ENCODE measurements at regions of chr5 and their contacts with region 1.

Region 1: GRCh38 chr5:148730943-148731861 is 76.9 kb upstream of the HTR4 start:
- DNase-seq: peak; percentile 89
- H3K4me3 ChIP-seq: no peak overlapping the region
- H3K27ac ChIP-seq: no peak overlapping the region
- H3K4me1 ChIP-seq: peaks cover 23% of the 10 kb centered on the region
- H3K27me3 ChIP-seq: no peaks in the 10 kb centered on the region
- CTCF ChIP-seq: peak; percentile 78 to 82
- POLR2A ChIP-seq: no peak

Region 2: GRCh38 chr5:148145916-148146315 is 585.3 kb before region 1 on chr5:
- CTCF ChIA-PET with region 1: interaction called, 14 read pairs
- POLR2A ChIA-PET with region 1: no interaction called
- dilution Hi-C with region 1: no loop called
- intact Hi-C with region 1: no loop called
- DNase-seq: peak; percentile 90
- H3K4me3 ChIP-seq: no peak overlapping the region
- H3K27ac ChIP-seq: peak overlapping the region; percentile 22
- H3K4me1 ChIP-seq: peaks cover 22% of the 10 kb centered on the region
- H3K27me3 ChIP-seq: no peaks in the 10 kb centered on the region
- CTCF ChIP-seq: no peak
- POLR2A ChIP-seq: no peak

Region 3: GRCh38 chr5:148397968-148398597 is 333.1 kb before region 1 on chr5:
- CTCF ChIA-PET with region 1: interaction called, 16 read pairs
- POLR2A ChIA-PET with region 1: no interaction called
- dilution Hi-C with region 1: no loop called
- intact Hi-C with region 1: loop called (anchors 1 kb)
- DNase-seq: no peak
- H3K4me3 ChIP-seq: no peak overlapping the region
- H3K27ac ChIP-seq: peak overlapping the region; percentile 55
- H3K4me1 ChIP-seq: peaks cover 45% of the 10 kb centered on the region
- H3K27me3 ChIP-seq: no peaks in the 10 kb centered on the region
- CTCF ChIP-seq: no peak
- POLR2A ChIP-seq: no peak

Region 4: GRCh38 chr5:148482691-148483462 is 248.3 kb before region 1 on chr5:
- CTCF ChIA-PET with region 1: interaction called, 25 read pairs
- POLR2A ChIA-PET with region 1: no interaction called
- dilution Hi-C with region 1: no loop called
- intact Hi-C with region 1: loop called (anchors 1 kb)
- DNase-seq: peak; percentile 59
- H3K4me3 ChIP-seq: no peak overlapping the region
- H3K27ac ChIP-seq: no peak overlapping the region
- H3K4me1 ChIP-seq: no peaks in the 10 kb centered on the region
- H3K27me3 ChIP-seq: peaks cover 0 to 7% of the 10 kb centered on the region in 2 experiments
- CTCF ChIP-seq: peak; percentile 85 to 90
- POLR2A ChIP-seq: no peak

Region 5: DNA sequence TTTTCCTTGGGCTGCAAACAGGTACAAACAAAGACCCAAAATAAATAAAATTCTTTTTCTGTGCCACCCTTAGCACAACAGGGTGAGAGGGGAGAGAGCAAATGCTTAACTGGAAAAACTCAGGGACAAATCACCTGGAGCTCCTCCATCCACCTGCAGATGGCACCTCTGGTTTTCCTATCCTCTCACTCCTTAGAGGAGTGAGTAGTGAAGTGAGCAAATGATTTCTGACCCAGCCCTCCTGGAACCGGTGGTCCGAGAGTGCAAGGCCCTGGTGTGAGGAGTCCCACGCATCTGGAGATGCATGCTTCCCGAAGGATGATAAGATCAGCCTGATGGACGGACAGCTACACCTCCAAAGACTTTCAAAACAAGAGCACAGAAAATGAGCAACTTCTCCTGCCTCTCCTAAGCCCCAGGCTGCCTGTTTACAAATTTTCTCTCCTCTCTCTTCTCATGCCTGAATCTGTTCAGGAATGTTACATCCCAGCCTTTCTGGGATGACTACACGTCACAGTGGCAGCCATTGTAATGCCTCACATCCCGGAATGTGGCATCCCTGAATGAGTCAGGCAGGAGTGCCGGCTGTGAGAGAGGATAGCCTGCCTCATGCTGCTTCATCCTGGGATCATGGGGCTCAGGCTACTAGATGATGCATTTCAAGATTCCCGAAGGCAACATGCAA is 181.7 kb after region 1 on chr5:
- CTCF ChIA-PET with region 1: interaction called, 10 read pairs
- POLR2A ChIA-PET with region 1: no interaction called
- dilution Hi-C with region 1: no loop called
- intact Hi-C with region 1: loop called (anchors 2 kb)
- DNase-seq: peak; percentile 79
- H3K4me3 ChIP-seq: no peak overlapping the region
- H3K27ac ChIP-seq: peak overlapping the region; percentile 96
- H3K4me1 ChIP-seq: peaks cover 55% of the 10 kb centered on the region
- H3K27me3 ChIP-seq: no peaks in the 10 kb centered on the region
- CTCF ChIP-seq: peak in 1 of 2 donors; percentile 4
- POLR2A ChIP-seq: no peak

Region 6: DNA sequence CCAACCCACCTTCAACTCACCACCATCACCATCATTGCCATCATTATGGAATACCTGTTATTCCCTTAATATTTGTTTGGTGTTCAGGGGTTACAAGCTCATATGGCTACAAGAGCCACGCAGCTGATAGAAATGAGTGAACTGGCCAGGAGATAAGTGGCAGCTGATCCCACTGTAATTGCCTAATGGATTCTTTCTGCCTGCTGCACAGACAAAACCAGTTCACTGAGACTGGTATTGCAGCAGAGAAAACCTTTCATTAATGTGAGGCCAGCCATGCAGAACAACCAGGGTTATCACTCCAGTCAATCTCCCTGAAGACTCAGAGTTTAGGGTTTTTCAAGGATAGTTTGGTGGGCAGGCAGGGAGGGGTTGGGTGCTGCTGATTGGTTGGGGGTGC is 335.8 kb after region 1 on chr5:
- CTCF ChIA-PET with region 1: no interaction called
- POLR2A ChIA-PET with region 1: no interaction called
- dilution Hi-C with region 1: no loop called
- intact Hi-C with region 1: no loop called
- DNase-seq: no peak
- H3K4me3 ChIP-seq: no peak overlapping the region
- H3K27ac ChIP-seq: no peak overlapping the region
- H3K4me1 ChIP-seq: peaks cover 20% of the 10 kb centered on the region
- H3K27me3 ChIP-seq: no peaks in the 10 kb centered on the region
- CTCF ChIP-seq: no peak
- POLR2A ChIP-seq: no peak

Region 7: DNA sequence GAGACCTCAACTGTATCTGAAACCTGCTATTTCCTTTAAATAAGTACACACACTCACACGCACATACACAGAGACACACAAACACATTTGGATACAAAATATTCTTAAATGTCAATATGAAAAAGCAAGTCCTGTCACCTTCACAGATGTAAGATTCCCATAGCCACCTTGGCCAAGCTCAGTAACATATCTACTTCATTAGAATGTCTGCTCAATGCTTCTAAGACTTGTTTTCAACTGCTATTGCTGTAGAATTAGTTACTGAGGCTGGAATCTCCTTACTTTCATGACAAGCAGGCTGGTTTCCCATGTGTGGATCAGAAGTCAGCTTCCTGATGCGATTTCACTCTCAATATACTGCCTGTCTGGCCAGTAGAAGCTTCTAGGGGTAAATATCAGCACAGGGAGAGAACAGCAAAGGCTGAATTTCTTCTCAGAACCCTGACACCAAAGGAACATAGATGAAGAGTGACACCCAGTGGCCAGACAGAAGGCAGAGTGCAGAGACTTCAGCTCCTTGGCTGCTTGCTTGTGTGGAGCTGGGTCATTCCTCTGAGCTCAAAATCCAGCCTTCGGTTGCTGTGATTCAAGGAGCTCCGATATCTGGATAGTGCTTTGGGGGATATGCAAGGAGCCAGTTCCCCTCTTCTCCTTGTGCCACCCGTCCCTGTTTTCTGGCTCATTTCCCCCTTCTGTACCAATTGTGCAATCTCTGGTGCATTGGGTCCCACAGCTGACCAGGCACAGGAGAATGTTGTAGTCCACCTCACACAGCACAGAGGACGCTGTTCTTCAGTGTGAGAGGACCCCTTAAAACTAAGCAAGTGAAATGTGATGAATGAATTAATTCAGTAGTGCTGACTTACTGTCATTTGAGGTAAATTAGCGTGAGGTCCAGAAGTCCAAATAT is 383.5 kb after region 1 on chr5:
- CTCF ChIA-PET with region 1: interaction called, 368 read pairs
- POLR2A ChIA-PET with region 1: no interaction called
- dilution Hi-C with region 1: loop called (anchors 25 kb)
- intact Hi-C with region 1: loop called (anchors 1 kb)
- DNase-seq: peak; percentile 88
- H3K4me3 ChIP-seq: no peak overlapping the region
- H3K27ac ChIP-seq: no peak overlapping the region
- H3K4me1 ChIP-seq: peaks cover 6% of the 10 kb centered on the region
- H3K27me3 ChIP-seq: no peaks in the 10 kb centered on the region
- CTCF ChIP-seq: peak; percentile 83 to 88
- POLR2A ChIP-seq: no peak

Measured in endothelial cell of umbilical vein (primary cell).